Left ventricle myocardium inferior (tissue), 1 donor: ENCODE measurements at regions of chr11 and their contacts with region 1.

Region 1: DNA sequence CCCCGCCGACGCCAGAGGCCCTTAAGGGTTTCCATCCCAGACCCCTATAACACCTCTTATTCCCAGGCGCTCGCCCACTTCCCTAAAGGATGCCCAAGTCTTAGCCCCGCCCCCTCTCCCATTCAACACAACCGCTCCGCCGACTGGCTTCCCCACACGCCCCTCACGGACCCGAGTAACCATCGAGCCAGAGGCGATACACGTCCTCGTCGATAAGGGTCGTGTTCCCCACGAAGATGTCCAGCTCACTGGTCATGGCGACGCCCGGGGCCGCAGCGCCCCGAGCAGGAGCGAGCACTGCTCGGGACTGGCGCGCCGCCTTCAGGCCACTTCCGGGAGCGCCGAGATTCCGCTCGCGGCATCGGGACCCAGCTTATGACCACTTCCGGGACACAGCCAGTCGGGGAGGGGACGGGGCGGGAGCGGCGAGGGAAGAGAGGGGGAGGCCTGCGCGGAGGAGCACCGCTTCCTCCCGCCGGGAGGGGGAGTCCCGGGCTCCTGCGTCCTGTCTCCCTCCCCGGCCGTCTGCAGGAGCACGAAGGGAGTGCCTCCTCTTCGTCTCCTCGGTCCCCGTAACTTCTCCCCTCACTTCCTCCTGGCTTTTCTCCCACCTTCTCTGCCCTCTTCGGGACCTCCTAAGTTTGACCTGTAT is at the start of gene FIBP:
- DNase-seq: peak; percentile 98
- H3K4me3 ChIP-seq: peak within 1 kb of the TSS; percentile 81
- H3K27ac ChIP-seq: peak within 1 kb of the TSS; percentile 99
- H3K4me1 ChIP-seq: peaks cover 77% of the 10 kb centered on the region
- H3K27me3 ChIP-seq: no peaks in the 10 kb centered on the region
- CTCF ChIP-seq: peak; percentile 84
- total RNA-seq, gene FIBP: 42.2 TPM

Region 2: GRCh38 chr11:65833297-65834030 is 54.8 kb before region 1 on chr11 and contains the start of gene SNX32:
- intact Hi-C with region 1: no loop called
- DNase-seq: peak; percentile 97
- H3K4me3 ChIP-seq: peak within 1 kb of the TSS; percentile 77
- H3K27ac ChIP-seq: peak within 1 kb of the TSS; percentile 38
- H3K4me1 ChIP-seq: peaks cover 18% of the 10 kb centered on the region
- H3K27me3 ChIP-seq: peaks cover 3% of the 10 kb centered on the region
- CTCF ChIP-seq: no peak
- total RNA-seq, gene SNX32: not detected

Region 3: GRCh38 chr11:65997286-65997685 is 109.0 kb after region 1 on chr11:
- intact Hi-C with region 1: loop called (anchors 10 kb)
- DNase-seq: no peak
- H3K4me3 ChIP-seq: no peak overlapping the region
- H3K27ac ChIP-seq: no peak overlapping the region
- H3K4me1 ChIP-seq: peaks cover 27% of the 10 kb centered on the region
- H3K27me3 ChIP-seq: no peaks in the 10 kb centered on the region
- CTCF ChIP-seq: no peak